ENCODE measurements at regions of chr4 and their contacts with region 1.

Region 1: GRCh38 chr4:6783053-6783981 is 790 bp downstream of the KIAA0232 start:
- DNase-seq: peak; percentile 95
- H3K4me3 ChIP-seq: peak overlapping the region; percentile 98 to 100 (median 98)
- H3K27ac ChIP-seq: peak overlapping the region; percentile 100
- H3K4me1 ChIP-seq: peaks cover 0 to 51% (median 25%) of the 10 kb centered on the region in 4 donors
- H3K27me3 ChIP-seq: no peaks in the 10 kb centered on the region
- CTCF ChIP-seq: no peak
- EP300 ChIP-seq: no peak
- POLR2A ChIP-seq: peak; percentile 77 to 80

Region 2: GRCh38 chr4:6269616-6270511 is 513.5 kb before region 1 on chr4 and contains the start of gene WFS1:
- intact Hi-C with region 1: loop called (anchors 10 kb)
- DNase-seq: peak; percentile 99
- H3K4me3 ChIP-seq: peak within 1 kb of the TSS; percentile 64 to 86 (median 84)
- H3K27ac ChIP-seq: peak within 1 kb of the TSS; percentile 87 to 96 (median 91)
- H3K4me1 ChIP-seq: peaks cover 0 to 54% (median 50%) of the 10 kb centered on the region in 4 donors
- H3K27me3 ChIP-seq: no peaks in the 10 kb centered on the region
- CTCF ChIP-seq: no peak
- EP300 ChIP-seq: no peak
- POLR2A ChIP-seq: peak; percentile 69 to 82
- total RNA-seq, gene WFS1: 34.6 to 69.0 (median 47.2) TPM

Region 3: GRCh38 chr4:6716018-6716911 is 67.1 kb before region 1 on chr4 and contains the start of gene BLOC1S4:
- intact Hi-C with region 1: loop called (anchors 1 kb)
- DNase-seq: peak; percentile 94
- H3K4me3 ChIP-seq: peak within 1 kb of the TSS; percentile 61 to 81 (median 70)
- H3K27ac ChIP-seq: peak within 1 kb of the TSS; percentile 88 to 94 (median 92)
- H3K4me1 ChIP-seq: peaks cover 0 to 34% (median 28%) of the 10 kb centered on the region in 4 donors
- H3K27me3 ChIP-seq: no peaks in the 10 kb centered on the region
- CTCF ChIP-seq: no peak
- EP300 ChIP-seq: no peak
- POLR2A ChIP-seq: peak; percentile 47 to 67
- total RNA-seq, gene BLOC1S4: 9.1 to 19.7 (median 14.6) TPM

Region 4: GRCh38 chr4:6824071-6824470 is 40.8 kb after region 1 on chr4:
- intact Hi-C with region 1: no loop called
- DNase-seq: no peak
- H3K4me3 ChIP-seq: no peak overlapping the region
- H3K27ac ChIP-seq: no peak overlapping the region
- H3K4me1 ChIP-seq: peaks cover 0 to 6% (median 2%) of the 10 kb centered on the region in 4 donors
- H3K27me3 ChIP-seq: no peaks in the 10 kb centered on the region
- CTCF ChIP-seq: no peak
- EP300 ChIP-seq: no peak
- POLR2A ChIP-seq: no peak

Region 5: GRCh38 chr4:6873792-6874461 is 90.6 kb after region 1 on chr4:
- intact Hi-C with region 1: loop called (anchors 5 kb)
- DNase-seq: peak; percentile 77
- H3K4me3 ChIP-seq: no peak overlapping the region
- H3K27ac ChIP-seq: no peak overlapping the region
- H3K4me1 ChIP-seq: peaks cover 0 to 5% (median 0%) of the 10 kb centered on the region in 4 donors
- H3K27me3 ChIP-seq: no peaks in the 10 kb centered on the region
- CTCF ChIP-seq: peak; percentile 39 to 82 (median 78)
- EP300 ChIP-seq: no peak
- POLR2A ChIP-seq: no peak

Region 6: GRCh38 chr4:6986781-6987587 is 203.7 kb after region 1 on chr4:
- intact Hi-C with region 1: loop called (anchors 5 kb)
- DNase-seq: peak; percentile 97
- H3K4me3 ChIP-seq: peak overlapping the region; percentile 59 to 90 (median 82)
- H3K27ac ChIP-seq: peak overlapping the region; percentile 88 to 95 (median 94)
- H3K4me1 ChIP-seq: peaks cover 0 to 63% (median 50%) of the 10 kb centered on the region in 4 donors
- H3K27me3 ChIP-seq: no peaks in the 10 kb centered on the region
- CTCF ChIP-seq: no peak
- EP300 ChIP-seq: no peak
- POLR2A ChIP-seq: peak; percentile 60 to 80

Region 7: GRCh38 chr4:7067452-7068278 is 284.3 kb after region 1 on chr4 and contains the start of gene GRPEL1:
- intact Hi-C with region 1: loop called (anchors 2 kb)
- DNase-seq: peak; percentile 100
- H3K4me3 ChIP-seq: peak within 1 kb of the TSS; percentile 56 to 99 (median 90)
- H3K27ac ChIP-seq: peak within 1 kb of the TSS; percentile 88 to 95 (median 92)
- H3K4me1 ChIP-seq: peaks cover 0 to 39% (median 28%) of the 10 kb centered on the region in 4 donors
- H3K27me3 ChIP-seq: no peaks in the 10 kb centered on the region
- CTCF ChIP-seq: no peak
- EP300 ChIP-seq: no peak
- POLR2A ChIP-seq: peak; percentile 93 to 95
- total RNA-seq, gene GRPEL1: 7.5 to 23.2 (median 15.0) TPM

Region 8: GRCh38 chr4:7518871-7519637 is 735.7 kb after region 1 on chr4:
- intact Hi-C with region 1: no loop called
- DNase-seq: no peak
- H3K4me3 ChIP-seq: no peak overlapping the region
- H3K27ac ChIP-seq: no peak overlapping the region
- H3K4me1 ChIP-seq: no peaks in the 10 kb centered on the region
- H3K27me3 ChIP-seq: no peaks in the 10 kb centered on the region
- CTCF ChIP-seq: no peak
- EP300 ChIP-seq: no peak
- POLR2A ChIP-seq: no peak